Mucosa of descending colon (tissue), 3 donors: ENCODE measurements at regions of chr15 and their contacts with region 1.

Region 1: DNA sequence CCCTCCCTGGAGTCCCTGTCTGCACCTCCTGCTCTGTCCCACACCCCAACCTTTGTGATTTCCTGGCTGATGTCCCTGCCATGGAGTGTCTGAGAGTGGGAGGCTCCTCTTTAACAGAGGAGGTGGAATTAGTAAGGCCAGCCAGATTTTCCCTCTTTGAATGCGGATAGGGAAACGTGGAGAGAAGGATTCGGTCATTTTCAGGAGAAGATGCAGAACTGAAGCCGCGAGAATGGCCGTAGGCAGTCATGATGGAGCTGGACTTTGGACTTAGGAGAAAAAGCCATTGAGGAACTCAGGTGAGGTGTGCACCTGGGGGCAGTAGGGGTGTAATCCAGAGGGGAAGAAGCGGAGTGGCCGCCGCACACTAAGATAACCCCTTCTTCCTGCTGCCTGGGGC is 138.1 kb upstream of the ATP10A start:
- DNase-seq: no peak
- ATAC-seq: no peak
- H3K4me3 ChIP-seq: no peak overlapping the region
- H3K4me1 ChIP-seq: no peaks in the 10 kb centered on the region
- CTCF ChIP-seq: no peak

Region 2: GRCh38 chr15:26065723-26066122 is 64.5 kb after region 1 on chr15:
- intact Hi-C with region 1: loop called in 1 of 2 experiments (anchors 10 kb)
- DNase-seq: no peak
- ATAC-seq: no peak
- H3K4me3 ChIP-seq: no peak overlapping the region
- H3K4me1 ChIP-seq: no peaks in the 10 kb centered on the region
- CTCF ChIP-seq: no peak